Heart right ventricle (tissue), 16 donors: ENCODE measurements at regions of chr18 and their contacts with region 1.

Region 1: GRCh38 chr18:61502472-61502871 is 169.2 kb downstream of the CDH20 start:
- DNase-seq: peak in 1 of 2 donors; percentile 44
- ATAC-seq: peak in 6 of 8 donors; percentile 50 to 62 (median 56)
- H3K4me3 ChIP-seq: no peak overlapping the region
- H3K27ac ChIP-seq: no peak overlapping the region
- H3K4me1 ChIP-seq: peaks cover 0 to 3% (median 0%) of the 10 kb centered on the region in 9 donors
- H3K27me3 ChIP-seq: peaks cover 0 to 9% (median 0%) of the 10 kb centered on the region in 7 donors
- CTCF ChIP-seq: peak; percentile 31 to 78 (median 68)

Region 2: DNA sequence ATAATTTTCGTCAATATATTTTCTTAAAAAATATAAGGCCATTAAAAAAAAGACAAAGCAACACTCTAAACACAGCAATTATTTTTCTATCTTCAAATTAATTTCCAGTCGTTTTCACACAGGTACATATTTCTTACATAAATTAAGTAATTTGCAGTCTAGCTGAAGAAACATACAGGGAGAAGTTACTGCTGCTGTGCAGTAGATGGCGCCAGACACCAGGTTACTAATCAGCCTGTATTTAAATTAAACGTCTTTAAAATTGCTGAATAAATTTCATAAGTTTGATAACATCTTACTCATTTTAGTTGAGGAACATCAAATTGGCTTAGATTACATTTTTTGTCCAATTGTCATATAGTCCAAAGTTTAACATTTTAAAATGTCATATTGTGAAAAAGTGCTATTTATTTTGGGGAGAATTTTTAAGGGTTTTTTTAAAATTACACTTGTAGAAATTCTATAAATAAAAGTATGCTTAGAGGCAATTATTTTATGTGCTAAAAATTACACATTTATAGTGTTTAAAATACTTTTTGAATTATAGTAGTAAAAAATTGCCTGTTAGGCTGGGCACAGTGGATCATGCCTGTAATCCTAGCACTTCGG is 1514.3 kb before region 1 on chr18:
- intact Hi-C with region 1: loop called in 2 of 10 experiments (anchors 5 to 10 kb)
- DNase-seq: no peak
- ATAC-seq: no peak
- H3K4me3 ChIP-seq: no peak overlapping the region
- H3K27ac ChIP-seq: no peak overlapping the region
- H3K4me1 ChIP-seq: no peaks in the 10 kb centered on the region
- H3K27me3 ChIP-seq: peaks cover 0 to 32% (median 20%) of the 10 kb centered on the region in 7 donors
- CTCF ChIP-seq: peak; percentile 63 to 95 (median 88)

Region 3: GRCh38 chr18:59996370-59996966 is 1506.0 kb before region 1 on chr18:
- intact Hi-C with region 1: loop called in 1 of 10 experiments (anchors 5 kb)
- DNase-seq: no peak
- ATAC-seq: no peak
- H3K4me3 ChIP-seq: no peak overlapping the region
- H3K27ac ChIP-seq: no peak overlapping the region
- H3K4me1 ChIP-seq: no peaks in the 10 kb centered on the region
- H3K27me3 ChIP-seq: peaks cover 0 to 48% (median 14%) of the 10 kb centered on the region in 7 donors
- CTCF ChIP-seq: peak in 7 of 9 donors; percentile 22 to 45 (median 37)

Region 4: DNA sequence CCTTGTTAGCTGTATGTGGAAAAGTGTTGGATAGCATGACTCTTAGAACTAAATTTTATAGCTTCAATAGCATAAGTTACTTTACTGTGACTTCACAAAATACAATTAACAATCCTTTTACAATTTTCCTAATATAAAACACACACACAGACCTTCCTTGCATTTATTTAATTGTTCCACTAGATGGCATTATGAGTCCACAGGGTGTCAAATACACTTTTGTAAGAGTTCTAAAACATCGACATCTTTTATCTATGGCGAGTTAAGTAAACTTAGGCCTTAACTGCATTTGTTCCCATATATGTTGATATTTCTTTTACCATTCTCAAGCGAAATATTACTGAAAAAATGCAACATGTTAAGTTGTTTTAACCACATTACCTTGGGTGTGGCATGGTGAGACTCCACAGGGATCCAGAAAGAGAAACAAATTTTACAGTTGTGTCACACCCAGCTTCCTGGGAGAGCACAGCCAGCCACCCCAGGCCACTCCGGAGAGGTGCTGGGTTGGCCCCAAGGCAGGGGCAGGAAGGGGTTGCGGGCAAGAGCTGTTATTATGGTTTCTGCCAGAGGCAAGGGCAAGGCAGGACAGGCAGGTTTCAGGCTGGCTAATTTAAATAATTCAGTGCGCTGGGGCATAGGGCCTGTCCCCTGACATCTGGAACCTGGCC is 817.5 kb before region 1 on chr18:
- intact Hi-C with region 1: loop called (anchors 1 to 10 kb)
- DNase-seq: no peak
- ATAC-seq: no peak
- H3K4me3 ChIP-seq: no peak overlapping the region
- H3K27ac ChIP-seq: no peak overlapping the region
- H3K4me1 ChIP-seq: peaks cover 0 to 4% (median 0%) of the 10 kb centered on the region in 9 donors
- H3K27me3 ChIP-seq: peaks cover 0 to 3% (median 0%) of the 10 kb centered on the region in 7 donors
- CTCF ChIP-seq: peak; percentile 40 to 78 (median 71)

Region 5: GRCh38 chr18:60809937-60810336 is 692.5 kb before region 1 on chr18:
- intact Hi-C with region 1: loop called in 5 of 10 experiments (anchors 5 to 10 kb)
- DNase-seq: no peak
- ATAC-seq: no peak
- H3K4me3 ChIP-seq: no peak overlapping the region
- H3K27ac ChIP-seq: no peak overlapping the region
- H3K4me1 ChIP-seq: no peaks in the 10 kb centered on the region
- H3K27me3 ChIP-seq: no peaks in the 10 kb centered on the region
- CTCF ChIP-seq: no peak

Region 6: DNA sequence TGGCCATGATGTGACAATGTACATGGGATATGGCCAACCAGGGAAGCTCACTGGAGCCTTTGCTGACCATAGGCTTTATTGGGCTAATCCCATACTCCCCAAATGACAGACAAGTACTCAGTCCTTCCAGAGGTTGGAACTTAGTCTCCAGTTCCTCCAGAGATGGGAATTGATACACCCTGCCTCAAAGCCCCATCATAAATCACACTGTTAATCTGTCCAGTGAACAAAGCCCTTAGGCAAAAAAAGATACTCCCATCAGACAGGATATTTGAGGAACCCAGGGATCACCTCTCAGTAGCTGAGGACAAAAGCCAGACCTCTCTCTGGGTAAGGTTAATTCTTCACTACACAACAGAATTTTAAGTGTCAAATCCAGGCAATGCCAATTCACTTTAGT is 416.7 kb before region 1 on chr18:
- intact Hi-C with region 1: loop called in 5 of 10 experiments (anchors 5 to 10 kb)
- DNase-seq: no peak
- ATAC-seq: no peak
- H3K4me3 ChIP-seq: no peak overlapping the region
- H3K27ac ChIP-seq: no peak overlapping the region
- H3K4me1 ChIP-seq: no peaks in the 10 kb centered on the region
- H3K27me3 ChIP-seq: no peaks in the 10 kb centered on the region
- CTCF ChIP-seq: no peak

Region 7: GRCh38 chr18:61322265-61322873 is 180.1 kb before region 1 on chr18:
- intact Hi-C with region 1: loop called in 9 of 10 experiments (anchors 2 to 10 kb)
- DNase-seq: peak; percentile 41 to 58
- ATAC-seq: peak in 6 of 8 donors; percentile 62 to 90 (median 72)
- H3K4me3 ChIP-seq: no peak overlapping the region
- H3K27ac ChIP-seq: no peak overlapping the region
- H3K4me1 ChIP-seq: no peaks in the 10 kb centered on the region
- H3K27me3 ChIP-seq: peaks cover 0 to 4% (median 0%) of the 10 kb centered on the region in 7 donors
- CTCF ChIP-seq: peak; percentile 29 to 77 (median 72)

Region 8: DNA sequence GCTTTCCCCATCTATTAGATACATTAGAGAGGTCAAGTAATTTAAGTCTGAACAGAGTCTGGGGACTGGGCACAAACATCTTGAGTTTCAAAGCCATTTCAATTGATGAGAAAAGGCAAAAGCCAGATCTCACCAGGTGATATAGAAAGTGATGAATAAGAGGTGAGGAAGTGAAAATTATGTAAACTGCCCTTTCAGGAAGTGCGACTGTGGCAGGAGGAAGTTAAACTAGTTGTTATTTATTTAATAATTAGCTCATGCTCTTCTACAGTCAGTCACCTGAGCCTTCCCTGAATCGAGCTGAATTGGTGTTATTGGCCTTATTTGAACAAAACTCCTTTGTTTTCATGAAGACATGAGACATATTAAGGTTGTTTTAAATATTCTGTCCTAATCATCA is 54.2 kb before region 1 on chr18:
- intact Hi-C with region 1: no loop called
- DNase-seq: no peak
- ATAC-seq: no peak
- H3K4me3 ChIP-seq: no peak overlapping the region
- H3K27ac ChIP-seq: no peak overlapping the region
- H3K4me1 ChIP-seq: no peaks in the 10 kb centered on the region
- H3K27me3 ChIP-seq: no peaks in the 10 kb centered on the region
- CTCF ChIP-seq: no peak

Region 9: DNA sequence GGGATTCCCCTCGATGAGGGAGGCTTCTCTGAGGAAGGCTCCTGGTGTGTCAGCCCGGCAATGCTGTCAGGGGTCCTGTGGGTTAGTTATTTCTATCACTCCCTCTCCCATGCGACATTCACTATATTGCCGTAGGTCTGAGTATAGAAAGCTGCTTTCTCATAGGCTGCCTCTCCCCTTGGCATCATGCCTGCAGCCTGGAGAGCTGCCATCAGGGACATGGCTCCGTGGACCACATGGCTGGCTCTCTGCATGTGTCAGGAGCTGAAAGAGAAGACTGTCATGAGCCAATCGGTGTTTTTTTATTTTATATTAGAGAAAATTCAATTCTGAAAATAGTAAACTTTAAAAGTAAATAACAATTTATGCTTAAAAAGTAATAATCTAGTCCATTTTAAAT is 28.7 kb after region 1 on chr18:
- intact Hi-C with region 1: no loop called
- DNase-seq: peak in 1 of 2 donors; percentile 51
- ATAC-seq: peak in 2 of 8 donors; percentile 57 to 59
- H3K4me3 ChIP-seq: no peak overlapping the region
- H3K27ac ChIP-seq: no peak overlapping the region
- H3K4me1 ChIP-seq: peaks cover 0 to 3% (median 0%) of the 10 kb centered on the region in 9 donors
- H3K27me3 ChIP-seq: no peaks in the 10 kb centered on the region
- CTCF ChIP-seq: no peak